ENCODE measurements at regions of chr1 and their contacts with region 1.

Region 1: GRCh38 chr1:205227584-205228006 is at the start of gene TMCC2:
- DNase-seq: peak; percentile 81
- H3K4me3 ChIP-seq: peak within 1 kb of the TSS; percentile 58 to 73 (median 71)
- H3K27ac ChIP-seq: peak within 1 kb of the TSS; percentile 78
- H3K4me1 ChIP-seq: peaks cover 39% of the 10 kb centered on the region
- H3K27me3 ChIP-seq: no peaks in the 10 kb centered on the region
- CTCF ChIP-seq: no peak
- total RNA-seq, gene TMCC2: 1.5 to 11.5 TPM

Region 2: GRCh38 chr1:204494281-204495077 is 733.1 kb before region 1 on chr1 and contains the start of gene PIK3C2B:
- CTCF ChIA-PET with region 1: no interaction called
- dilution Hi-C with region 1: no loop called
- in situ Hi-C with region 1: no loop called
- intact Hi-C with region 1: no loop called
- DNase-seq: peak; percentile 84
- H3K4me3 ChIP-seq: peak within 1 kb of the TSS; percentile 41 to 93 (median 82)
- H3K27ac ChIP-seq: peak within 1 kb of the TSS; percentile 30
- H3K4me1 ChIP-seq: peaks cover 17% of the 10 kb centered on the region
- H3K27me3 ChIP-seq: no peaks in the 10 kb centered on the region
- CTCF ChIP-seq: peak; percentile 26 to 68
- total RNA-seq, gene PIK3C2B: 7.5 to 14.5 TPM

Region 3: GRCh38 chr1:205121660-205122488 is 105.7 kb before region 1 on chr1 and contains the start of gene RBBP5:
- CTCF ChIA-PET with region 1: no interaction called
- dilution Hi-C with region 1: no loop called
- in situ Hi-C with region 1: no loop called
- intact Hi-C with region 1: loop called (anchors 1 kb)
- DNase-seq: peak; percentile 93
- H3K4me3 ChIP-seq: peak within 1 kb of the TSS; percentile 68 to 96 (median 85)
- H3K27ac ChIP-seq: peak within 1 kb of the TSS; percentile 99
- H3K4me1 ChIP-seq: peaks cover 12% of the 10 kb centered on the region
- H3K27me3 ChIP-seq: no peaks in the 10 kb centered on the region
- CTCF ChIP-seq: peak; percentile 67 to 85
- total RNA-seq, gene RBBP5: 15.2 to 17.5 TPM

Region 4: DNA sequence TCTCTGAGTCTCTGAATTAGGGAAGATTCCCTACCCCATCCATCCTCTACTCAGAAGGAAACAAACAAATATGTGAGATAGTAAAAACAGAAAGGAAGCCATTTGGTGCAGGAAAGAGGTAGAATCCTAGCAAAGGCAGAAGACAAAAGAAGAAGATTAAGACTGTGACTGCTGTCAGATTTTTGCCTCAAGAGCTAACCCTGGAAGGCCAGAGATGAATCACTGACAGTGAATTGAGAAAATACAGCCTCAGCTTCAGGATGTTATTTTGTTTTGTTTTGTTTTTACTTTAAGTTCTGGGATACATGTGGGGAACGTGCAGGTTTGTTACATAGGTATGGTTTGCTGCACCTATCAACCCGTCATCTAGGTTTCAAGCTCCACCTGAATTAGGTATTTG is 47.8 kb before region 1 on chr1:
- CTCF ChIA-PET with region 1: interaction called, 11 read pairs
- dilution Hi-C with region 1: loop called (anchors 5 kb)
- in situ Hi-C with region 1: no loop called
- intact Hi-C with region 1: loop called (anchors 5 kb)
- DNase-seq: no peak
- H3K4me3 ChIP-seq: no peak overlapping the region
- H3K27ac ChIP-seq: no peak overlapping the region
- H3K4me1 ChIP-seq: peaks cover 15% of the 10 kb centered on the region
- H3K27me3 ChIP-seq: no peaks in the 10 kb centered on the region
- CTCF ChIP-seq: no peak

Region 5: DNA sequence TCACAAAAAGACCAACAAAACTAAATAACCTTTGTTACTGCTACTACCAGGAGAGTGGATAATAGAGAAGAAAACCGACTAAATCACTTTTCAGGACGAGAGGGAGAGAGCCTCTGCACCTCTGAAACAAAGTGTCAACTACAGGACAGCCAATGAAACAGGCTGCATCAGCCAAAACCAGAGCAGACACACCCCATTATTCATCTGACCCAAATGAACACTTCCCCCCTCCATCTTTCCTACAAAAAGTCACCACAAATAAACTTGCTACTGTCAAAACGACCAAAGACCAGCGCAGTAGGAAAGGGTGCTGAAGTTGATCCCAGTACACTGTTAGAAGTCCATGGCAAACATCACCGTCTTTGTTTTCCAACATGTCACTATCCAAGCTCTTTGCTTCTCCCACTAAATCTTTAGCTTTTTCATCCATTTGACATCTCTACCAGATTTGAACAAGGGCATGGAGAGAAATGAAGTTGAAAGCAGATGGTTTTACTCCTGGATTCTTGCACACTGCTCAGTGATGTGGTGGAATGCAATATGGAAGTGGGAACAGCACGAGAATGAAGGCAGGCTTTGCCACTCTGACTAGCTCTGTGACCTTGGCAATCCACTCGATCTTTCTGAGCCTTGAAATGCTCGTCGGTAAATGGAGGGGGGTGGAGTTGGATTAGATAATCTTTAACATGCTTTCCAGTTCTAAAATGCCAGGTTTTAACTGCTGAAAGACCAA is 36.6 kb before region 1 on chr1:
- CTCF ChIA-PET with region 1: interaction called, 3 read pairs
- dilution Hi-C with region 1: loop called (anchors 5 kb)
- in situ Hi-C with region 1: no loop called
- intact Hi-C with region 1: no loop called
- DNase-seq: no peak
- H3K4me3 ChIP-seq: no peak overlapping the region
- H3K27ac ChIP-seq: no peak overlapping the region
- H3K4me1 ChIP-seq: peaks cover 3% of the 10 kb centered on the region
- H3K27me3 ChIP-seq: no peaks in the 10 kb centered on the region
- CTCF ChIP-seq: no peak

Region 6: DNA sequence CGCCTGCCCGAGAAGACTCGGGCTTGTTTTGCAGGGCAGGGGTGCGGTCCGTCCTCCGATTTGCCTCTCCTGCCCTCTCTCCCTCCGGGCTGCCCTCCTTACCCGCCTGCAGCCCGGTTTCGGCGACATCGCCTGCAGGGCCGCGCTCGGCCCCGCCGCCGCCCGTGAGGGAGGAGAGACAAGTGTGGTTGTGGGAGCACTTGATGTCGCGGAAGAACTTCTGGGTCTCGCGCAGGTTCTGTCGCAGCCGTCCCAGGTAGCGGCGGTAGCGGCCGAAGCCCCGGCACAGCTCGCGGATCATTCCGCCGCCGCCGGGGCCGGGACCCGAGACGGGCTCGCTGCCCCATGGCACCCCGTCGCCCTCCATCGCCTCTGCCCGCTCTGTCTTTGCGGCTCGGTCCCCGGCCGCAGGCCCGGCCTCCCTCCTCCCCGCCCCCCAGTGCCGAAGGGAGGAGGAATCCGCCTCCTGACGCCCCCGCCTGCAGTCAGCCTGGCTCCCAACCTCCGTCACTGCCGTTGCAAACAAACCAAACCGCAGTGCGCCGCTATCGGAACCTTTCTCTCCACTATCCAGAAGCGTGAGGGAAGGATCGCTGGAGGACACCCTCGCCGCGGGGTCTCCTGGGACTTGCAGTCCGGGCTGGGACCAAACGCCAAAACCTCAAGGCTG is 16.3 kb before region 1 on chr1 and contains the start of gene DSTYK:
- CTCF ChIA-PET with region 1: no interaction called
- dilution Hi-C with region 1: no loop called
- in situ Hi-C with region 1: no loop called
- intact Hi-C with region 1: loop called (anchors 1 kb)
- DNase-seq: peak; percentile 93
- H3K4me3 ChIP-seq: peak within 1 kb of the TSS; percentile 71 to 97 (median 81)
- H3K27ac ChIP-seq: peak within 1 kb of the TSS; percentile 80
- H3K4me1 ChIP-seq: peaks cover 4% of the 10 kb centered on the region
- H3K27me3 ChIP-seq: no peaks in the 10 kb centered on the region
- CTCF ChIP-seq: no peak
- total RNA-seq, gene DSTYK: 11.0 to 19.2 TPM

Region 7: DNA sequence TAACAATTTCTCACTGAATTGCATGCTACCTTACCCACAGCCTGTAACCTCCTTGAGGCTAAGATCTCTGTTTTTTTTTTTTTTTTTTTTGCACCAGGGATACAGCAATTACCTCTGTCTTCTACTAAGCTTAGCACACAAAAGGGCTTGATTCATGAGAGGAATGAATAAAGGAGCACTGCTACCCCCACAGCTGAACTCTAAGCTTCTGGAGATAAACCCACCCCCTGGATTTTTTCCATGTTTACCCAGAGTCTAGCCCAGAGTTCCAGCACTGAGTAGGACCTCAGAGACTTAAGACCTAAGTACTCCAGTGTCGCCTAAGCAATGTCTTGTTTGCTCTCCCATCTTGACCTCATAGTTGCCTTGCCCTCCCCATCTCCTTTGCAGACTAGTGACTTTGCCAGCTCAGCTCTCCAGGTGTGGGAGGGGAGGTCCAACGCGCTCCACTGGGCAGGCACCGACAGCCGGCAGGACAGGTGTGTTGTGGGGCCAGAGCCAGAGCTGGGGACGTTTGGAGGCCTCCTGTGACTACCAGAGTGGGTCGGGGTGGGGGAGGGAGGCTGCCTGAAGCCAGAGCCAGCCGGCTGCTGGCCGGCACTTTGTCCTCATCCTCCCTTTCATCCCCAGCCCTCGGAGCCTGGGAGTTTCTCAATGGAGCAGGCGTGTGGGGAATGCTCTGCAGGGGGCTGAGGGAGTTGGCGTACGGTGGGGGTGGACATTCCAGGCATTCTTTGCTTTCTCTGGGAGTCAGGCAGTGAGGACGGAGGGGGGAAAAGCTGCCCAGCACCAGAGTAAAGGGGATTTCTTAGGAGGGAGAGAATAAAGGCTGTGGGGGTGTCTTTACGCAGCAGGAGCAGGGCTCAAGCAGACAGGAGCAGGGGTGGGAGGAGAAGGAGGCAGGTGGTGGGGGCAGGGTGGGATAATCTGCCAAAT is 73.6 kb after region 1 on chr1:
- CTCF ChIA-PET with region 1: no interaction called
- dilution Hi-C with region 1: loop called (anchors 5 kb)
- in situ Hi-C with region 1: no loop called
- intact Hi-C with region 1: no loop called
- DNase-seq: peak; percentile 81
- H3K4me3 ChIP-seq: peak overlapping the region in 1 of 3 experiments; percentile 14
- H3K27ac ChIP-seq: peak overlapping the region; percentile 46
- H3K4me1 ChIP-seq: peaks cover 49% of the 10 kb centered on the region
- H3K27me3 ChIP-seq: no peaks in the 10 kb centered on the region
- CTCF ChIP-seq: no peak

Region 8: GRCh38 chr1:205416322-205416721 is 188.7 kb after region 1 on chr1:
- CTCF ChIA-PET with region 1: no interaction called
- dilution Hi-C with region 1: no loop called
- in situ Hi-C with region 1: no loop called
- intact Hi-C with region 1: no loop called
- DNase-seq: no peak
- H3K4me3 ChIP-seq: no peak overlapping the region
- H3K27ac ChIP-seq: no peak overlapping the region
- H3K4me1 ChIP-seq: no peaks in the 10 kb centered on the region
- H3K27me3 ChIP-seq: peaks cover 2% of the 10 kb centered on the region
- CTCF ChIP-seq: no peak

Measured in mammary epithelial cell (primary cell).